A549 (cell line): ENCODE measurements at regions of chrX and their contacts with region 1.

Region 1: DNA sequence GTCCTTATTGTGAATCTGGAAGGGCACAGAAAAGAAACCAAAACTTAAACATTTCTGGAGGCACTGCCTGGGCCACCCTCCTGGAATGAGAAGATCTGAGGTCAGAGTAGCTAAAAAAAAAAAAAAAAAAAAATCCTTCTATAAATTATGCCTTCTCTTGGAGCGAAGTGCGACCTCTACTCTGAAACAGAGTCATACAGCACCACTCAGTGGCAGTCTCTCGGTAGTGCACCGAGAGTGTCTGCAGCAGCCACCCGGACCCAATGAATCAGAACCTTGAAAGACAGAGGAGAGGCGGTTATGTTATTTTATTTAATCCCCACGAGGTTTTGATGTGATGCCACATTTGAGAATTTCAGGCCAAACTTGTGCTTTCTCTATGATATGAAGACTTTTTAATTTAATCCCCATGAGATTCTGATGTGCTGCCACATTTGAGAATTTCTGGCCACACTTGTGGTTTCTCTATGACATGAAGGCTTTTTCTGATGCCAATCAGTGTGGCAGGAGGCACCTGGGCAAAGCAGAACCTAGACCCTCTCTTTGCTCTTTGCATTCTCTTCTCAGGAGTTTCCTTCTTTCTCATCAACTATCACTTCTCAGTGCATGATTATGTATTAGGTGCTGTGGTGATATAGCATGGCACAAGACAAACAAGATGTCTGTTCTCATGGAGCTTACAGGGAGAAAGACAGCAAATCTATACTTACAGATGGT is 5.6 kb upstream of the CT47C1 start:
- DNase-seq: peak; percentile 46 to 50
- ATAC-seq: peak; percentile 76 to 90
- H3K4me3 ChIP-seq: no peak overlapping the region
- H3K27ac ChIP-seq: no peak overlapping the region
- H3K4me1 ChIP-seq: no peaks in the 10 kb centered on the region
- CTCF ChIP-seq: peak; percentile 75
- EP300 ChIP-seq: no peak
- POLR2A ChIP-seq: no peak
- RAD21 ChIP-seq: peak; percentile 82 to 87

Region 2: GRCh38 chrX:118839334-118839958 is 227.7 kb before region 1 on chrX:
- CTCF ChIA-PET with region 1: interaction called, 30 read pairs
- POLR2A ChIA-PET with region 1: no interaction called
- DNase-seq: peak; percentile 74 to 80
- ATAC-seq: peak; percentile 97 to 99
- H3K4me3 ChIP-seq: peak overlapping the region; percentile 68
- H3K27ac ChIP-seq: peak overlapping the region; percentile 89 to 90
- H3K4me1 ChIP-seq: 0 out of 3 replicates have a peak, but pooled peaks cover 5% of the 10 kb centered on the region
- CTCF ChIP-seq: peak; percentile 70
- EP300 ChIP-seq: no peak
- POLR2A ChIP-seq: peak; percentile 39
- RAD21 ChIP-seq: peak; percentile 32 to 58; a peak in 3 of 5 replicates

Region 3: DNA sequence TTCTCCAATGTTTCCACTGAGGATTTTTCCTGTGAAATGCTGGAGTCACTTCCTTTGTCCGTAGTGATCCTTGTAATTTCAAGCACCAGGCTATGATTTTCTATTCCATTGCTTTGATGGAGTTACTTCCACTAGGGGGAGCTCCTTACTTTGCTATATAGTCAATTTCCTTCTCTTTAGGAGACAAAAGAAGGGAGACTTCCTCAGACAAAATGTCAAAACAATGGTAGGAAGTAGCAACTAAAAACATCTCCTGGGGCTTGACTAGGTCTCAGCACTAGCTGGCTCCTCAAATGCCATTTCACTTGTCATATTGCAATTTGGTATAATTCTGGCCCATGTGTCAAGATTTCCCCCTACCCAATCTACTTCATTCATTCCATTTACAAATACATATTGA is 219.5 kb before region 1 on chrX:
- CTCF ChIA-PET with region 1: interaction called, 56 read pairs
- POLR2A ChIA-PET with region 1: no interaction called
- DNase-seq: peak; percentile 49 to 51
- ATAC-seq: peak; percentile 71 to 81
- H3K4me3 ChIP-seq: no peak overlapping the region
- H3K27ac ChIP-seq: no peak overlapping the region
- H3K4me1 ChIP-seq: no peaks in the 10 kb centered on the region
- CTCF ChIP-seq: peak; percentile 70
- EP300 ChIP-seq: no peak
- POLR2A ChIP-seq: no peak
- RAD21 ChIP-seq: peak; percentile 83 to 86

Region 4: DNA sequence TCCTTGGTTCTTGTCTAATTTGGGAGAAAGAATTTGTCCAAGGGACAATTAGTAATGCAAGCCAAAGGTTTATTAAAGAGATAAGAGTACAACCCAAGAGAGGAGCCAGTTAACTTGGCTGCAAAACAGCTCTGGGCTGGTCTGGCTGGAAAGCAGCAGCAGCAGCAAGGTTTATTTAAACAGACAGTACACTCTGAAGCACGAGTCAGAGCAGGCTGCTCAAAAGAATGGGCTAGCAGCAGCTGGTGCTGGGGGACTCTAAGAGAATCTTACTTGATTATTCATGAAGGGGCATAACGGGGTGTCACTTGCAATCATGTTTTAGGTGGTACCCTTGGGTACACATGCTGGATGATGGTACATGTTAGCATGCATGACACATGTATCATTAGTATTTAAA is 11.5 kb before region 1 on chrX:
- CTCF ChIA-PET with region 1: interaction called, 16 read pairs
- POLR2A ChIA-PET with region 1: no interaction called
- DNase-seq: no peak
- ATAC-seq: no peak
- H3K4me3 ChIP-seq: no peak overlapping the region
- H3K27ac ChIP-seq: no peak overlapping the region
- H3K4me1 ChIP-seq: no peaks in the 10 kb centered on the region
- CTCF ChIP-seq: no peak
- EP300 ChIP-seq: no peak
- POLR2A ChIP-seq: no peak
- RAD21 ChIP-seq: no peak